Mammary epithelial cell (primary cell): ENCODE measurements at regions of chr7 and their contacts with region 1.

Region 1: DNA sequence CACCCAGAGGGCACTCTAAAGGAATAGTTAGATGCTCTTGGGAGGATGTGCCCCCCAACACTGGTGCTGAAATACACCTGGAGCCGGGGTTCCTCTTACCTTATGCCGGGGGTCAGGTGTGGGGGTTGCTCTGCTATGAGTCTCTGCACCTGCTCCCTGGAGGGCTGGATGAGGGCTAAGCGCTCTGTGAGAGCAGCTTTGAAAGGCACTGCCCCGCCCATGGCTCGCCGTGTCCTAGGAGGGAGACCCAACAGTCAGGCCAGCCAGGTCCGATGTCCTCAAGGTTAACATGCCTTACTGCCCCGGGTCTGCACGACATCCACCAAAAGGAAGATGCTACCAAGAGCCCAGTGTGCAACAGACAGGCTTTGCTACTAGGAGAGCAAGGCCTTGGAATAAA is 31.7 kb downstream of the PSPH start:
- DNase-seq: no peak
- H3K4me3 ChIP-seq: no peak overlapping the region
- H3K27ac ChIP-seq: no peak overlapping the region
- H3K4me1 ChIP-seq: peaks cover 3% of the 10 kb centered on the region
- H3K27me3 ChIP-seq: no peaks in the 10 kb centered on the region
- CTCF ChIP-seq: no peak

Region 2: GRCh38 chr7:55928006-55928767 is 91.3 kb before region 1 on chr7:
- CTCF ChIA-PET with region 1: no interaction called
- dilution Hi-C with region 1: loop called (anchors 5 kb)
- in situ Hi-C with region 1: no loop called
- intact Hi-C with region 1: no loop called
- DNase-seq: no peak
- H3K4me3 ChIP-seq: no peak overlapping the region
- H3K27ac ChIP-seq: no peak overlapping the region
- H3K4me1 ChIP-seq: no peaks in the 10 kb centered on the region
- H3K27me3 ChIP-seq: no peaks in the 10 kb centered on the region
- CTCF ChIP-seq: no peak

Region 3: DNA sequence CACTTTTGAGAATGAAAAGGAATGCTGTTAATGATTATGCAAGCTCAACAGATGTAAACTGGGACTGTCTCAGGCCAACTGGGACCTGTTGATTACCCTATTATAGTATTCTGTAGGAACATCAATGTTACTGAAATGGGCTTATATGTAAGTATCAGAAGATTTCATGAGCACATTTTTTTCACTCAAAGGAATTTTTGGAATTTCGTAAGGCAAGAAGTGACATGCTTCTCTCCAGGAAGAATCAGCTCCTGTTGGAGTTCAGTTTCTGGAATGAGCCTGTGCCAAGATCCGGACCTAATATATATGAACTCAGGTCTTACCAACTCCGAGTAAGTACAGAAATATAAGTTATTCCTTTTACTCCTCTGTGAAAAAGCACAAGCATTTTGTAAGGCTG is 36.0 kb before region 1 on chr7:
- CTCF ChIA-PET with region 1: no interaction called
- dilution Hi-C with region 1: loop called (anchors 5 kb)
- in situ Hi-C with region 1: no loop called
- intact Hi-C with region 1: no loop called
- DNase-seq: peak; percentile 29
- H3K4me3 ChIP-seq: no peak overlapping the region
- H3K27ac ChIP-seq: no peak overlapping the region
- H3K4me1 ChIP-seq: peaks cover 9% of the 10 kb centered on the region
- H3K27me3 ChIP-seq: no peaks in the 10 kb centered on the region
- CTCF ChIP-seq: no peak

Region 4: DNA sequence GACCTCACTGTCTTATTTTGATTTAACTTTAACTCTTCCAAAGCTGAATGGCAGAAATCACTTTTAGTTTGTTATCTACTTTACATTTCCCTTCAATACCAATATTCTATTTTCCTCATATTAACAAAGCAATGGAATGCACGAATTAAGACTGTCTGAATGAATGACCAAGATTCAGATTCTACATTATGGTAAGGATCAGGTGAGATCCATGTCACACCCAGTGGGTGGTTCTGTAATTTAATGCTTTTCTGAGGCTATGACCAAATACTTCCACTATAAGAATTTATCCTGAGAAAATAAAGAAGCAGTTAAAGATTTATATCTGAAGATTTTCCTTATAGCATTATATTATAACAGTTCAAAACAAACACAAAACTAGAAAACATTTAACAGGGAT is 186.9 kb after region 1 on chr7:
- CTCF ChIA-PET with region 1: no interaction called
- dilution Hi-C with region 1: no loop called
- in situ Hi-C with region 1: no loop called
- intact Hi-C with region 1: no loop called
- DNase-seq: no peak
- H3K4me3 ChIP-seq: no peak overlapping the region
- H3K27ac ChIP-seq: no peak overlapping the region
- H3K4me1 ChIP-seq: no peaks in the 10 kb centered on the region
- H3K27me3 ChIP-seq: no peaks in the 10 kb centered on the region
- CTCF ChIP-seq: no peak